ENCODE measurements at regions of chr2 and their contacts with region 1.

Region 1: GRCh38 chr2:155965415-155966063 is 367.0 kb downstream of the NR4A2 start:
- DNase-seq: no peak
- ATAC-seq: peak; percentile 52; the same call in 2 of the 3 replicates
- H3K4me3 ChIP-seq: no peak overlapping the region
- H3K27ac ChIP-seq: no peak overlapping the region
- H3K4me1 ChIP-seq: peaks cover 9% of the 10 kb centered on the region
- H3K27me3 ChIP-seq: no peaks in the 10 kb centered on the region
- CTCF ChIP-seq: no peak
- EP300 ChIP-seq: no peak
- POLR2A ChIP-seq: no peak
- RAD21 ChIP-seq: no peak

Region 2: DNA sequence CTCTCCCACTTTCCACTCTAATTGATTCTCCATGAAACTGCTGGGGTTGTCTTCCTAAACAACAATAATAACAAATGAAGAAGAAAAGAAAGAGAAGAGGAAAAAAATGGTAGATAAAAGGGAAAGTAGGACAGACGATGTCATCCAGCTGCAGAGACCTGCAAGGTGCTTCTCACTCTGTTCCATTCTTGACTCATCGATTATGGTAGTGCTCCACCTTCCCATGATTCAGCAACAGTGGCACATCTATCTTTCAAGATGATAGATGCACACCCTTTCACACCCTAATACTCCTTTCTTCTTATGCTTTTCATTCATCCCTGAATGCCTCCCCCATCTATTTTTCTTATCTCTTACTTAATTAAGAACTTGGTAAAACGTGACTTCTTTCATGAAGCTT is 243.2 kb before region 1 on chr2:
- CTCF ChIA-PET with region 1: no interaction called
- POLR2A ChIA-PET with region 1: no interaction called
- in situ Hi-C with region 1: no loop called
- intact Hi-C with region 1: no loop called
- DNase-seq: no peak
- ATAC-seq: no peak
- H3K4me3 ChIP-seq: no peak overlapping the region
- H3K27ac ChIP-seq: no peak overlapping the region
- H3K4me1 ChIP-seq: no peaks in the 10 kb centered on the region
- H3K27me3 ChIP-seq: no peaks in the 10 kb centered on the region
- CTCF ChIP-seq: no peak
- EP300 ChIP-seq: no peak
- POLR2A ChIP-seq: no peak
- RAD21 ChIP-seq: no peak

Region 3: DNA sequence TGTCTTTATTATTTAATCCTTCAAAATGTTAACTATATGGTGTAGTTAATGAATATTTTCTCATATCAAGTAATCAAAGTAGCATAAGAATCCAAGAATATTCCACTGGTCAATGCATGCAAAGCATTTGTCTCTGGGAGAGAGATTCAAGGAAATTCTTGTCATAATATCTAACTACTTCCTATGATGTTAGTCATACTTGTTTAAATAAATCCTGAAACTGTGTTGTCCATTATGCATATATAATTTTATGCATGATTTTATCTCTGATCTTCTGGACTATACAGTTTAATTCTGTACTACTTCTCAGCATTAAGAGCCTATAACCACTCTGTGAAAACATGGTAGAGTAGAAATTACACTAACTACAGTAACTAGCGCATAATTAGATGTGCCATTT is 21.3 kb before region 1 on chr2:
- CTCF ChIA-PET with region 1: no interaction called
- POLR2A ChIA-PET with region 1: no interaction called
- in situ Hi-C with region 1: no loop called
- intact Hi-C with region 1: loop called (anchors 1 kb)
- DNase-seq: no peak
- ATAC-seq: no peak
- H3K4me3 ChIP-seq: no peak overlapping the region
- H3K27ac ChIP-seq: no peak overlapping the region
- H3K4me1 ChIP-seq: no peaks in the 10 kb centered on the region
- H3K27me3 ChIP-seq: no peaks in the 10 kb centered on the region
- CTCF ChIP-seq: no peak
- EP300 ChIP-seq: no peak
- POLR2A ChIP-seq: no peak
- RAD21 ChIP-seq: no peak